Sciatic nerve (tissue), 2 donors: ENCODE measurements at regions of chr15 and their contacts with region 1.

Region 1: GRCh38 chr15:26516102-26516980 is 256.5 kb downstream of the GABRB3 start:
- DNase-seq: no peak
- ATAC-seq: no peak

Region 2: GRCh38 chr15:26453914-26454313 is 62.4 kb before region 1 on chr15:
- intact Hi-C with region 1: loop called (anchors 10 kb)
- DNase-seq: no peak
- ATAC-seq: no peak